ENCODE measurements at regions of chr2 and their contacts with region 1.

Region 1: GRCh38 chr2:69645031-69645431 is 1.5 kb upstream of the AAK1 start:
- DNase-seq: no peak

Region 2: DNA sequence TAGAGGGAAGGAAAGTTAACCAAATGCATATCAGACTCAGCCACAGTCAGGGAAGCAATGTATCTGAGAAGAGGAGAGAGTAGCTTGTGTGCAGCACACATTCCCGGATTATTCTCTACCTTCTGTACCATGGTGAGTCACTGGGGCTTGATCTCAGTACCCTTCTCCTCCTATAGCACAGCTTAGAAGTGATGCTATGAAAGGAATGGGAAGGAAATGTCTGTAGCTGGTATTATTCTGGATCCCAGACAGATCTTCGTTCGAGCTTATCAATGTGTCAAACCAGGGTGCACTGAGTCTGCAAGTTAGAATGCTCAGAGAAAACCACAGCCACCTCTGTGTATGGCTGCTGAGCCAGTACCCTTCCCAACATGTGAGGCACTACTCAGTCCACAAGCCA is 119.8 kb before region 1 on chr2:
- intact Hi-C with region 1: no loop called
- DNase-seq: no peak

Region 3: GRCh38 chr2:69559442-69560146 is 85.4 kb before region 1 on chr2:
- intact Hi-C with region 1: loop called in 1 of 2 experiments (anchors 5 kb)
- DNase-seq: no peak

Region 4: GRCh38 chr2:69660637-69661036 is 15.6 kb after region 1 on chr2:
- intact Hi-C with region 1: no loop called
- DNase-seq: no peak

Measured in posterior vena cava (tissue), 2 donors.